ENCODE measurements at regions of chr13 and their contacts with region 1.

Region 1: DNA sequence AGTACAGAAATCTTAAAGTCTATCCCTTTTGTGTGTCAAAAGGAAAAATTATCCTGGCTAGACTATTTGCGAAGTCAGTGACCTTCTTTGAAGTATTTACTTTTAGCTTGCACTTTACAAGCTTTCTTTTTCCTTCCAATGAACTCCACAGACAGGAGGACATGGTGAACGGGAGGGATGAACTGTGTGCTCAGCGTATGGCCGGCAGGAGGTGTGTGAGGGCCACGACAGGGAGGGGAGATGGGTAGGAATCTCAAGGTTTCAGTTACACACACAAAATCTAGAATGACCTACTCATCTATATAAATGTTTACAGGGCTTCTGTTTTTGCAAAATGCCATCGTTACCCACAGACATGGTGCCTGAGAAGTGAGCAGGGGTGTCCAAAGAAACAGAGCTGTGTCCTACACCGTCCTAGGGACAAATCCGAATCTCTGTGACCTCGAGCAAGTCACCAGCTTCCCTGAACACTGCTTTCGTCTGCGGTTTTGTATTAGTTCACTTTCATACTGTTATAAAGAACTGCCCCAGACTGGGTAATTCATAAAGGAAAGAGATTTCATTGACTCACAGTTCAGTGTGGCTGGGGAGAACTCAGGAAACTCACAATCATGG is 537.2 kb downstream of the LIG4 start:
- DNase-seq: no peak

Region 2: DNA sequence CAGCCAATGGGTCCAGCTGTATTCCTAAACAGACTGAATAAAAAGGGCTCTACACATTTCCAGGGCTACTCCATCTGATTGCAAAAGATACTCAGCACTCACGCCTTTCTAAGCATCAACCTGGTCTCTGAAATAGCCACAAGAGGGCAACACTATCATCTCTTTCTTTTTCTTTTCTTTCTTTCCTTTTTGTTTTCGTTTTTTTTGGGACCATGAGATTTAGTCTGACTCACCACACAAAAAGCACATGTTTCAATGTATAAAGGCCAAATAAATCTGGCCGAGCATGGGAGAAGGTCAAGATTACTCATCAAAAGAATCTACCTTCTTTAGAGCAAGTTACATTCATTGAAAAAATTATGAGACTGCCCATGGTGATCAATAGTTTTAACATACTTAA is 304.6 kb before region 1 on chr13:
- in situ Hi-C with region 1: loop called (anchors 25 kb)
- DNase-seq: peak; percentile 82

Region 3: DNA sequence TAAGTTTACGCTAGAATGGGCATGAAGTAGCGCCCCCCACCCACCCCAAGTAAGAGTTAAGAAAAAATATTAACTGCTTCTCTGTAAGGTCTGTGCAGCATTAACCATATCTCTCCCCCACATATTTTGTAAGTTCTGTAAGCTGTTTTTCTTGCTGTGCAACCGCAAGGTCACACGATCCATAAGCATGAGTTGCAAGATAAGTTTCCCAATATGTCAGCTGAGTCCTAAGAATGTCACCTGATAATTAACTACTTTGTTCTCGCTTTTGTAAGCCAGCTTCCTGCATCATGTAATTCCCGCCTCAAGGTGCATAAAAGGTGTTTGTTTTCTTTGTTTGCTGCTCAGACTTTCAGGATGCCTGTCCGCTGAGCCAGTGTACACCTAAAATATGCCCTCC is 1138.2 kb after region 1 on chr13:
- in situ Hi-C with region 1: no loop called
- DNase-seq: no peak

Measured in ACHN (cell line).